Left cardiac atrium (tissue), 4 donors: ENCODE measurements at regions of chr6 and their contacts with region 1.

Region 1: DNA sequence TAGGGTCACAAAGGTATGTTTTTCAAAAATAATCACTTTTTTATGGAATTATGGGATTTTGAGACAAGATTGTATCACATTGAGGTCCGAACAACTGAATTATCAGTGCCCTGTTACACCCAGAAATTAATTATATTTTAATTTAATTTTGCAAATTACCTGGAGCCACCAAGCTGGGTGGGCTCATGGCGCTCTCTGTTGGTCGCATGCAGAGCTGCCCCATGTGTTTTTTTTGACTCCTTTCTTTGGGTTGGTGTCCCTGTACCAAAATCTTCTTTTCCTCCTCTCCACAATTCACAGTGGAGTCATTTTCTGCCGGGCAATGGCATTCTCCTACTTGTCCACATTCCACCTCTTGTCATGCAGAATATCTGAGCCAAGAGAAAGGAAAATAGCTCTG is 38.9 kb upstream of the FRMD1 start:
- DNase-seq: no peak
- ATAC-seq: no peak

Region 2: GRCh38 chr6:167907837-167908681 is 209.9 kb before region 1 on chr6:
- intact Hi-C with region 1: loop called in 1 of 2 experiments (anchors 10 kb)
- DNase-seq: no peak
- ATAC-seq: peak in 1 of 2 donors; percentile 48

Region 3: GRCh38 chr6:168333039-168333438 is 215.1 kb after region 1 on chr6:
- intact Hi-C with region 1: no loop called
- DNase-seq: no peak
- ATAC-seq: no peak